Mammary epithelial cell (primary cell): ENCODE measurements at regions of chr10 and their contacts with region 1.

Region 1: DNA sequence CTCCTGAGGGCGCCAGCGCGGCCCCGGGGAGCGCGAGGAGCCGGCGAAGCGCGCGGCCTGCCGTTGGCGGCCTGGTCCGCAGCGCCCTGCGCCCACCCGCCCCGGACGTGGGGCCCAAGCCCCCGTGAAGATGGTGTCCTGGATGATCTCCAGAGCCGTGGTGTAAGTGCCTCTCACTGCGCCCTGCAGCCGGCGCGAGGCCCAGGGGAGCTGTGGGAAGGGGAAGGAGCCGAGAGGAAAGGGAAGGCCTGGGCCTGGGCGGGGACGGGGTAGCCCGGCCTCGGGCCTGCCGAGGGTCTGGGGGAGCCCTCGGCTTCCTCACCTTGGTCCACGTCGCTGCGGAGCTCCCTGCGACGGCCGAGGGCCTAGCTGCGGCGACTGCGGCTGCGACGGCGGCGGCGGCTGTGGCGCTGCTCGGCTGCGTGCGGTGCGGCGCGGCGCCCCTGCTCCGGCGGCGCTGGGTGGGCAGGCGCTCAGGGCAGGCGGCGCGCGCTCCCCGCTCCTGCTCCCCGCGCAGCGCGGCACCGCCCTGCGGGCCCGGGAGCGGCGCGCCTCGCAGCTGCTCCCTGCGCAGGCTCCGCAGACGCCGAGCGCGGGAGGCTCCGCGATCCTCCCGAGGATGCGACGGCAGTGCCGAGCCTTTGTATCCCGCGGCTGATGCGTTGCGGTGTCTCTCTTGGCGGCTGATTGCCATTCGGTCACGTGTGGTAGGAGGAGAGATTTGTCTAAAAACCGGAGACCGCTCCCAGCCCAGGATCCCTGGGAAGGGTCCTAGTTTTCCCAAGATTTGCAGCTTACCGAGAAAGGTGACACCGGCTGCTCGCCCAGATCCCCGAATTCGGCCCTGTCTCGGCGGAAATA is 445 bp downstream of the REEP3 start:
- DNase-seq: peak; percentile 66
- H3K4me3 ChIP-seq: peak overlapping the region; percentile 91 to 95 (median 92)
- H3K27ac ChIP-seq: peak overlapping the region; percentile 90
- H3K4me1 ChIP-seq: peaks cover 27% of the 10 kb centered on the region
- H3K27me3 ChIP-seq: no peaks in the 10 kb centered on the region
- CTCF ChIP-seq: no peak

Region 2: GRCh38 chr10:63115732-63116383 is 405.8 kb before region 1 on chr10:
- CTCF ChIA-PET with region 1: no interaction called
- dilution Hi-C with region 1: no loop called
- in situ Hi-C with region 1: no loop called
- intact Hi-C with region 1: no loop called
- DNase-seq: peak; percentile 94
- H3K4me3 ChIP-seq: no peak overlapping the region
- H3K27ac ChIP-seq: peak overlapping the region; percentile 60
- H3K4me1 ChIP-seq: peaks cover 19% of the 10 kb centered on the region
- H3K27me3 ChIP-seq: no peaks in the 10 kb centered on the region
- CTCF ChIP-seq: no peak

Region 3: DNA sequence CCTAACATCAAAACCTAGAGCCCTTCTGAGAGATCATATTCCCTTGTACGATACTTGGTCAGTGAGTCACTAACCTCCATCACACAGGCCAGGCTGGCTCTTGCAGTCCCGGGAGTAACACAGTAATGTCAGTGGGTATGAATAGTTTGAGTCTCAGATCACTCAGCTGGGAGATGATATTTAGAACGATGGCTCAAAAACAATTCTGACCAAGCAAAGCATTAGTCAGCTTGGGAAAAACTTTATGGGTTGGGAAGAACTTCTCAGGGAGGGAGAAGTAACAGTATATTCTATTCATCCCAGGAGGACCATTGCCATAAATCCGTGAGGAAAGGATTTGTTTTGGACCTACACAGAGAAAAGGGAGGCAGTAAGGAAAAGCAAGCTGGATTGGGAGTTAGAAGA is 178.6 kb after region 1 on chr10:
- CTCF ChIA-PET with region 1: no interaction called
- dilution Hi-C with region 1: no loop called
- in situ Hi-C with region 1: loop called in 1 of 2 experiments (anchors 25 kb)
- intact Hi-C with region 1: loop called (anchors 1 kb)
- DNase-seq: peak; percentile 98
- H3K4me3 ChIP-seq: no peak overlapping the region
- H3K27ac ChIP-seq: peak overlapping the region; percentile 98
- H3K4me1 ChIP-seq: peaks cover 36% of the 10 kb centered on the region
- H3K27me3 ChIP-seq: no peaks in the 10 kb centered on the region
- CTCF ChIP-seq: no peak